ENCODE measurements at regions of chr2 and their contacts with region 1.

Region 1: DNA sequence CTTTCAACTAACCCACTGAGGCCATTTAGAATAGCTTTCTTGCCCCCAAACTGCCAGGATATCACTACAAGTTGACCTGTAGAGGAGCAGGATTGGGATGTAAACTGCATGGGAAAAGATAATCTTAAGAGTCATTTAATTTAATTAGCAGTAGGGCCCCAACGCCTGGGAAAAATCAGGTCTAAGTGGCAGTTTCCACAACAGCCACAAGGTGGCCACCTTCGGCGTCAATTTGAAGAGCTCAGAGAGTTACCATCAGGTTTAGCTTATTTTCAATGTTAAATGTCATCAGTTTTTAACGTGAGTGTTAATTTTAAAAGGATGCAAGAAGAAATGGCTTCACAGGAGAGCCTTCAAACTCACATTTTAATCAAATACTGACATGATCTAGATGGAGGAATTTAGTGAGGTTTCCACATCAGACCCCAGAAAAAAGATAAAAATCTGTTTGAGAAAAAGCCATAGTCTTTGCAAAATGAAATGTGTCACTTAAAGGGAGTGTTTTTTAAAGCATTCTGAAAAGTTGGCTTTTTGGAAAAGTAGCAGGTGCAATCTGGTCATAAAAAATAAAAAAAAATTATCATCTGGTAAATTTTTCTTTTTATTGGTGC is 77.3 kb upstream of the UPP2 start:
- DNase-seq: peak; percentile 56 to 78 (median 64)
- ATAC-seq: peak; percentile 90
- H3K4me3 ChIP-seq: no peak overlapping the region
- H3K27ac ChIP-seq: no peak overlapping the region
- H3K4me1 ChIP-seq: peaks cover 0 to 4% of the 10 kb centered on the region in 2 experiments; a peak in 1 of 5 replicates
- H3K27me3 ChIP-seq: peaks cover 2 to 6% of the 10 kb centered on the region in 2 experiments; a peak in 4 of 5 replicates
- CTCF ChIP-seq: peak; percentile 84 to 95 (median 91)
- EP300 ChIP-seq: no peak
- POLR2A ChIP-seq: no peak
- RAD21 ChIP-seq: peak; percentile 83 to 88

Region 2: GRCh38 chr2:157932480-157933159 is 91.8 kb before region 1 on chr2:
- CTCF ChIA-PET with region 1: no interaction called
- POLR2A ChIA-PET with region 1: no interaction called
- in situ Hi-C with region 1: no loop called
- intact Hi-C with region 1: no loop called
- DNase-seq: no peak
- ATAC-seq: no peak
- H3K4me3 ChIP-seq: no peak overlapping the region
- H3K27ac ChIP-seq: no peak overlapping the region
- H3K4me1 ChIP-seq: peaks cover 19 to 75% of the 10 kb centered on the region in 2 experiments
- H3K27me3 ChIP-seq: no peaks in the 10 kb centered on the region
- CTCF ChIP-seq: no peak
- EP300 ChIP-seq: no peak
- POLR2A ChIP-seq: no peak
- RAD21 ChIP-seq: no peak

Region 3: DNA sequence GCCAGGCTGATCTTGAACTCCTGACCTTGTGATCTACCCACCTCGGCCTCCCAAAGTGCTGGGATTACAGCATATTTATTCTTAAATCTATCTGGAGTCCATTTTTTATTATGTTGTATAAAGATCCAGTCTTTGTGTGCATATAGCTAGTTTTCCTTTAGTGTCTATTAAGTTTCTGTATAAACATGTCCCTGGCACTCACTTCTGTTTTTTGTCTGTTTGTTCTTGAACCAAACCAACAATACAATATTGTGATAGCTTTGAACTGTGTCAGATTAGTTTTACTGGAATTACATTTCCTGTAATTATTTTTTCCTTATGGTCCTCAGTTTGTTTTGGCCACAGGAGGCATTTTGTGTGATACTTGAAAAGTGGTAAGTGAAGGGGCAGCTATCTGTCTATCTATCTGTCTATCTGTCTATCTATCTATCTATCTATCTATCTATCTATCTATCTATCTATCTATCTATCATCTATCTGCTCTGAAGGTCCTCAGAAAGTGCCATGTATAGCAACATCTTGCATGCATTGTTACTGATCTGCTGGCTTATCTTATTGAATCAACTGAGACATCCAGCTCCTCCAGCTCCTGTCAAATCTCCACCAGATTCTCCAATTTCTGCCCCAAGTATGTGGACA is 77.4 kb before region 1 on chr2:
- CTCF ChIA-PET with region 1: no interaction called
- POLR2A ChIA-PET with region 1: no interaction called
- in situ Hi-C with region 1: no loop called
- intact Hi-C with region 1: no loop called
- DNase-seq: no peak
- ATAC-seq: no peak
- H3K4me3 ChIP-seq: no peak overlapping the region
- H3K27ac ChIP-seq: no peak overlapping the region
- H3K4me1 ChIP-seq: peaks cover 0 to 4% of the 10 kb centered on the region in 2 experiments; a peak in 2 of 5 replicates
- H3K27me3 ChIP-seq: no peaks in the 10 kb centered on the region
- CTCF ChIP-seq: no peak
- EP300 ChIP-seq: no peak
- POLR2A ChIP-seq: no peak
- RAD21 ChIP-seq: no peak

Region 4: GRCh38 chr2:158753641-158754611 is 729.5 kb after region 1 on chr2:
- CTCF ChIA-PET with region 1: interaction called, 9 read pairs
- POLR2A ChIA-PET with region 1: interaction called, 3 read pairs
- in situ Hi-C with region 1: no loop called
- intact Hi-C with region 1: loop called (anchors 1 kb)
- DNase-seq: peak; percentile 74 to 84 (median 82)
- ATAC-seq: peak; percentile 97
- H3K4me3 ChIP-seq: no peak overlapping the region
- H3K27ac ChIP-seq: no peak overlapping the region
- H3K4me1 ChIP-seq: no peaks in the 10 kb centered on the region
- H3K27me3 ChIP-seq: peaks cover 4 to 18% of the 10 kb centered on the region in 2 experiments; a peak in 4 of 5 replicates
- CTCF ChIP-seq: peak; percentile 89 to 93 (median 90)
- EP300 ChIP-seq: no peak
- POLR2A ChIP-seq: no peak
- RAD21 ChIP-seq: peak; percentile 85 to 88

Measured in K562 (cell line).